Posterior vena cava (tissue), 2 donors: ENCODE measurements at regions of chr1 and their contacts with region 1.

Region 1: DNA sequence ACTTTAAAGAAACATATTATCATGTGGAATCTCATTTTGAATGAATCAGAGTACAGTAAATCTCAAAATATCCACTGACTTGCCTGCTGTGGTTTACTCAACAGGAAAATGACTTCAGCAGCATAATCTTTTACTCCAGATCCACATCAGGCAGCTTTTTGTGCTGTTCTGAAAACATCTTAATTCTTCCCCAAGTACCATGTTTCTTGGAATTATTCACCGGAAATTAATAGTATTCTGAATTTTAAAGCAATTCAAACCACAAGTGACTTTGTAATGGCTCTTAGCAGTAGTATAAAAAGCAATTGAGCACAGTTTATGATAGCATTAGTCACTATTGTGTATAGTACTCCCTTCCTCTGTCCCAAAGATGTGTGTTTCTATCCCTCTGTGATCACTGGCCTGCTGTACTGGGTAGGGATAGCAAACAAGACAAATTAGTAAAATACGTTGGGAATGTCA is 64.2 kb upstream of the ERRFI1 start:
- DNase-seq: no peak

Region 2: GRCh38 chr1:8040586-8040985 is 49.7 kb before region 1 on chr1:
- intact Hi-C with region 1: no loop called
- DNase-seq: peak; percentile 90

Region 3: GRCh38 chr1:8127171-8127641 is 36.9 kb after region 1 on chr1:
- intact Hi-C with region 1: loop called in 1 of 2 experiments (anchors 5 kb)
- DNase-seq: no peak